ENCODE measurements at regions of chr1 and their contacts with region 1.

Region 1: GRCh38 chr1:100530880-100531487 is 7.0 kb upstream of the GPR88 start:
- DNase-seq: peak; percentile 61
- ATAC-seq: peak; percentile 95
- H3K4me3 Mint-ChIP-seq: peak overlapping the region; percentile 42
- H3K27ac Mint-ChIP-seq: peak overlapping the region; percentile 76
- H3K4me1 Mint-ChIP-seq: peaks cover 40% of the 10 kb centered on the region
- H3K27me3 Mint-ChIP-seq: peaks cover 18% of the 10 kb centered on the region

Region 2: GRCh38 chr1:100543640-100544039 is 12.7 kb after region 1 on chr1:
- CTCF ChIA-PET with region 1: interaction called, 20 read pairs
- POLR2A ChIA-PET with region 1: no interaction called
- DNase-seq: peak; percentile 58
- ATAC-seq: peak; percentile 41
- H3K4me3 Mint-ChIP-seq: no peak overlapping the region
- H3K27ac Mint-ChIP-seq: no peak overlapping the region
- H3K4me1 Mint-ChIP-seq: peaks cover 10% of the 10 kb centered on the region
- H3K27me3 Mint-ChIP-seq: peaks cover 39% of the 10 kb centered on the region

Region 3: DNA sequence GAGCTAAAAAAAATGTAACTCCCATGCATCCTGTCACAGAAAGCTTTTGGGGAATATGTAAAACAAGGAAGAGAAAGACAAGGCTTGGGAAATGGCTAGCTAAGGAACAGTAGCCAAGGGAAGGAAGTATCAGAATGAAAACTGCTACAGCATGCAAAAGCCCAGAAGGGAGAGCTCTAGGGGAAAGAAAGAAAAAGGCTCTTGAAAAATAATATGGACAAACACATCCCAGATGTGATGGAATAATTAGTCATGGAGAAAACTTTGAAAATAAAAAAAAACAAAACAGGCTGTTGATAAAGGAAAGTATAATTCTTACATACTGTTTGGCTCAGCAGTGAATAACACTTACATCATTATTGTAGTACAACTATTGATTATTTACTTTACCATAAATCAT is 140.6 kb after region 1 on chr1:
- CTCF ChIA-PET with region 1: no interaction called
- POLR2A ChIA-PET with region 1: no interaction called
- DNase-seq: no peak
- ATAC-seq: no peak
- H3K4me3 Mint-ChIP-seq: no peak overlapping the region
- H3K27ac Mint-ChIP-seq: no peak overlapping the region
- H3K4me1 Mint-ChIP-seq: no peaks in the 10 kb centered on the region
- H3K27me3 Mint-ChIP-seq: peaks cover 16% of the 10 kb centered on the region

Measured in activated CD8-positive, alpha-beta T cell treated with anti-CD3 and anti-CD28 coated beads, Interleukin-2, amount 10 ng/mL, durations not matched to agents 7 days and 5 days (primary cell).